K562 (cell line): ENCODE measurements at regions of chr1 and their contacts with region 1.

Region 1: GRCh38 chr1:207822602-207823451 is 71.0 kb downstream of the CD46 start:
- DNase-seq: peak; percentile 82 to 97 (median 90)
- ATAC-seq: peak; percentile 83
- H3K4me3 ChIP-seq: no peak overlapping the region
- H3K27ac ChIP-seq: peak overlapping the region; percentile 30; the same call in 2 of the 3 replicates
- H3K4me1 ChIP-seq: peaks cover 56 to 65% of the 10 kb centered on the region in 2 experiments
- H3K27me3 ChIP-seq: no peaks in the 10 kb centered on the region
- CTCF ChIP-seq: no peak
- EP300 ChIP-seq: no peak
- POLR2A ChIP-seq: no peak
- RAD21 ChIP-seq: no peak

Region 2: DNA sequence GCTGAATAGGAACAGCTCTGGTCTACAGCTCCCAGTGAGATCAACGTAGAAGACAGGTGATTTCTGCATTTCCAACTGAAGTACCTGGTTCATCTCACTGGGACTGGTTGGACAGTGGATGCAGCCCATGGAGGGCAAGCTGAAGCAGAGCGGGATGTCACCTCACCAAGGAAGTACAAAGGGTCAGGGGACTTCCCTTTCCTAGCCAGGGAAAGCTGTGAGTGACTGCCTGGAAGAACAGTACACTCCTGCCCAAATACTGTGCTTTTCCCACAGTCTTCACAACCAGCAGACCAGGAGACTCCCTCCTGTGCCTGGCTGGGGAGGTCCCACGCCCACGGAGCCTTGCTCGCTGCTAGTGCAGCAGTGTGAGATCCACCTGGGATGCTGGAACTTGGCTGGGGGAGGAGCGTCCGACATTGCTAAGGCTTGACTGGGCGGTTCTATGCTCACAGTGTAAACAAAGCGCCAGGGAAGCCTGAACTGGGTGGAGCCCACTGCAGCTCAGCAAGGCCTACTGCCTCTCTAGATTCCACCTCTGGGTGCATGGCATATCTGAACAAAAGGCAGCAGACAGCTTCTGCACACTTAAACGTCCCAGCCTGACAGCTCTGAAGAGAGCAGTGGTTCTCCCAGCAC is 163.2 kb before region 1 on chr1:
- CTCF ChIA-PET with region 1: no interaction called
- POLR2A ChIA-PET with region 1: no interaction called
- in situ Hi-C with region 1: no loop called
- intact Hi-C with region 1: no loop called
- DNase-seq: no peak
- ATAC-seq: peak; percentile 76
- H3K4me3 ChIP-seq: no peak overlapping the region
- H3K27ac ChIP-seq: no peak overlapping the region
- H3K4me1 ChIP-seq: peaks cover 0 to 11% of the 10 kb centered on the region in 2 experiments; a peak in 2 of 5 replicates
- H3K27me3 ChIP-seq: no peaks in the 10 kb centered on the region
- CTCF ChIP-seq: no peak
- EP300 ChIP-seq: no peak
- POLR2A ChIP-seq: no peak
- RAD21 ChIP-seq: no peak

Region 3: GRCh38 chr1:207691841-207692240 is 131.0 kb before region 1 on chr1:
- CTCF ChIA-PET with region 1: no interaction called
- POLR2A ChIA-PET with region 1: no interaction called
- in situ Hi-C with region 1: no loop called
- intact Hi-C with region 1: no loop called
- DNase-seq: peak in 2 of 4 experiments; percentile 37 to 78
- ATAC-seq: peak; percentile 74
- H3K4me3 ChIP-seq: no peak overlapping the region; the same call in 1 of the 2 replicates
- H3K27ac ChIP-seq: peak overlapping the region; percentile 54
- H3K4me1 ChIP-seq: peaks cover 5 to 12% of the 10 kb centered on the region in 2 experiments; a peak in 3 of 5 replicates
- H3K27me3 ChIP-seq: no peaks in the 10 kb centered on the region
- CTCF ChIP-seq: no peak
- EP300 ChIP-seq: no peak
- POLR2A ChIP-seq: no peak
- RAD21 ChIP-seq: no peak

Region 4: GRCh38 chr1:207797229-207797961 is 25.4 kb before region 1 on chr1:
- CTCF ChIA-PET with region 1: no interaction called
- POLR2A ChIA-PET with region 1: interaction called, 12 read pairs
- in situ Hi-C with region 1: no loop called
- intact Hi-C with region 1: no loop called
- DNase-seq: peak; percentile 74 to 88 (median 79)
- ATAC-seq: peak; percentile 96
- H3K4me3 ChIP-seq: no peak overlapping the region
- H3K27ac ChIP-seq: no peak overlapping the region
- H3K4me1 ChIP-seq: no peaks in the 10 kb centered on the region
- H3K27me3 ChIP-seq: no peaks in the 10 kb centered on the region
- CTCF ChIP-seq: peak; percentile 77 to 91 (median 87)
- EP300 ChIP-seq: no peak
- POLR2A ChIP-seq: no peak; the same call in none of the 2 replicates
- RAD21 ChIP-seq: peak; percentile 85 to 87

Region 5: GRCh38 chr1:207868774-207869721 is 46.2 kb after region 1 on chr1:
- CTCF ChIA-PET with region 1: interaction called, 5 read pairs
- POLR2A ChIA-PET with region 1: interaction called, 10 read pairs
- in situ Hi-C with region 1: loop called (anchors 5 kb)
- intact Hi-C with region 1: loop called (anchors 1 kb)
- DNase-seq: peak; percentile 84 to 92 (median 90)
- ATAC-seq: peak; percentile 88
- H3K4me3 ChIP-seq: peak overlapping the region; percentile 59
- H3K27ac ChIP-seq: peak overlapping the region; percentile 46
- H3K4me1 ChIP-seq: peaks cover 45 to 54% of the 10 kb centered on the region in 2 experiments
- H3K27me3 ChIP-seq: no peaks in the 10 kb centered on the region
- CTCF ChIP-seq: peak; percentile 83 to 92 (median 87)
- EP300 ChIP-seq: peak; percentile 29; the same call in 1 of the 2 replicates
- POLR2A ChIP-seq: no peak
- RAD21 ChIP-seq: peak; percentile 67 to 84; a peak in 3 of 4 replicates